ENCODE measurements at regions of chr2 and their contacts with region 1.

Region 1: DNA sequence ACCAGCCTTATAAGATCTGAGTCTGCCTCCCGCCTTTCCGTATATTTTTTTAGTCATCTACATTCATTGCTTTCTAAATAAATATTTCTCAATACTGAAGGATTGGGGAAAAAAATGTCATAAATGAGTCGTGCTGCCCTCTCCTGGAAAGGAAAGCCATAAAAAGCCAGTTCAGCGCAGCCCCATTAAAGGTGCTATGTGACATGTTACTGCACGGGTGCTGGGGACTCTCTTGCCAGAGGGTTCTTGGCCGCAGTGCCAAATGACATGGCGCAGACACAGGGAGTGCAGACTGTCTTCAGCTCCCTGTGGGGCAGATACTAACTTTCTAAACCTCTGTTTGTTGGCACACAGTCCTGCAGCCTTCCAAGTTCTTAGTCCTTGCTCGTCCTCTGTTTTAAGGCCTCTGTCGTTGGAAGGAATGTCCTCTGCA is 53.7 kb upstream of the MAP3K20 start:
- DNase-seq: peak; percentile 57
- ATAC-seq: peak; percentile 88
- H3K4me3 ChIP-seq: no peak overlapping the region
- H3K27ac ChIP-seq: no peak overlapping the region
- H3K4me1 ChIP-seq: no peaks in the 10 kb centered on the region
- H3K27me3 ChIP-seq: peaks cover 2 to 26% of the 10 kb centered on the region in 2 experiments; a peak in 3 of 5 replicates
- CTCF ChIP-seq: peak; percentile 71
- EP300 ChIP-seq: no peak
- POLR2A ChIP-seq: no peak
- RAD21 ChIP-seq: peak; percentile 69

Region 2: GRCh38 chr2:172806493-172806892 is 215.5 kb before region 1 on chr2:
- CTCF ChIA-PET with region 1: interaction called, 6 read pairs
- POLR2A ChIA-PET with region 1: no interaction called
- in situ Hi-C with region 1: no loop called
- intact Hi-C with region 1: loop called (anchors 1 kb)
- DNase-seq: peak; percentile 42
- ATAC-seq: peak; percentile 37; the same call in 1 of the 3 replicates
- H3K4me3 ChIP-seq: no peak overlapping the region
- H3K27ac ChIP-seq: no peak overlapping the region
- H3K4me1 ChIP-seq: no peaks in the 10 kb centered on the region
- H3K27me3 ChIP-seq: no peaks in the 10 kb centered on the region
- CTCF ChIP-seq: peak; percentile 88
- EP300 ChIP-seq: no peak
- POLR2A ChIP-seq: no peak
- RAD21 ChIP-seq: peak; percentile 73

Region 3: GRCh38 chr2:172821370-172822347 is 200.3 kb before region 1 on chr2:
- CTCF ChIA-PET with region 1: no interaction called
- POLR2A ChIA-PET with region 1: no interaction called
- in situ Hi-C with region 1: no loop called
- intact Hi-C with region 1: no loop called
- DNase-seq: no peak
- ATAC-seq: no peak
- H3K4me3 ChIP-seq: no peak overlapping the region
- H3K27ac ChIP-seq: no peak overlapping the region
- H3K4me1 ChIP-seq: no peaks in the 10 kb centered on the region
- H3K27me3 ChIP-seq: peaks cover 0 to 17% of the 10 kb centered on the region in 2 experiments; a peak in 3 of 5 replicates
- CTCF ChIP-seq: no peak
- EP300 ChIP-seq: no peak
- POLR2A ChIP-seq: no peak
- RAD21 ChIP-seq: no peak

Region 4: GRCh38 chr2:172864182-172864581 is 157.8 kb before region 1 on chr2:
- CTCF ChIA-PET with region 1: interaction called, 3 read pairs
- POLR2A ChIA-PET with region 1: no interaction called
- in situ Hi-C with region 1: no loop called
- intact Hi-C with region 1: loop called (anchors 5 kb)
- DNase-seq: peak; percentile 13
- ATAC-seq: peak; percentile 62
- H3K4me3 ChIP-seq: no peak overlapping the region
- H3K27ac ChIP-seq: no peak overlapping the region
- H3K4me1 ChIP-seq: 0 out of 2 replicates have a peak, but pooled peaks cover 9% of the 10 kb centered on the region
- H3K27me3 ChIP-seq: peaks cover 1 to 20% of the 10 kb centered on the region in 2 experiments; a peak in 3 of 5 replicates
- CTCF ChIP-seq: peak; percentile 78
- EP300 ChIP-seq: no peak
- POLR2A ChIP-seq: no peak
- RAD21 ChIP-seq: no peak

Region 5: GRCh38 chr2:172972005-172972619 is 49.8 kb before region 1 on chr2:
- CTCF ChIA-PET with region 1: interaction called, 21 read pairs
- POLR2A ChIA-PET with region 1: no interaction called
- in situ Hi-C with region 1: loop called (anchors 5 kb)
- intact Hi-C with region 1: loop called (anchors 1 kb)
- DNase-seq: peak; percentile 52
- ATAC-seq: peak; percentile 70
- H3K4me3 ChIP-seq: no peak overlapping the region
- H3K27ac ChIP-seq: no peak overlapping the region
- H3K4me1 ChIP-seq: peaks cover 17% of the 10 kb centered on the region
- H3K27me3 ChIP-seq: peaks cover 0 to 11% of the 10 kb centered on the region in 2 experiments; a peak in 2 of 5 replicates
- CTCF ChIP-seq: peak; percentile 78
- EP300 ChIP-seq: no peak
- POLR2A ChIP-seq: no peak
- RAD21 ChIP-seq: no peak

Region 6: DNA sequence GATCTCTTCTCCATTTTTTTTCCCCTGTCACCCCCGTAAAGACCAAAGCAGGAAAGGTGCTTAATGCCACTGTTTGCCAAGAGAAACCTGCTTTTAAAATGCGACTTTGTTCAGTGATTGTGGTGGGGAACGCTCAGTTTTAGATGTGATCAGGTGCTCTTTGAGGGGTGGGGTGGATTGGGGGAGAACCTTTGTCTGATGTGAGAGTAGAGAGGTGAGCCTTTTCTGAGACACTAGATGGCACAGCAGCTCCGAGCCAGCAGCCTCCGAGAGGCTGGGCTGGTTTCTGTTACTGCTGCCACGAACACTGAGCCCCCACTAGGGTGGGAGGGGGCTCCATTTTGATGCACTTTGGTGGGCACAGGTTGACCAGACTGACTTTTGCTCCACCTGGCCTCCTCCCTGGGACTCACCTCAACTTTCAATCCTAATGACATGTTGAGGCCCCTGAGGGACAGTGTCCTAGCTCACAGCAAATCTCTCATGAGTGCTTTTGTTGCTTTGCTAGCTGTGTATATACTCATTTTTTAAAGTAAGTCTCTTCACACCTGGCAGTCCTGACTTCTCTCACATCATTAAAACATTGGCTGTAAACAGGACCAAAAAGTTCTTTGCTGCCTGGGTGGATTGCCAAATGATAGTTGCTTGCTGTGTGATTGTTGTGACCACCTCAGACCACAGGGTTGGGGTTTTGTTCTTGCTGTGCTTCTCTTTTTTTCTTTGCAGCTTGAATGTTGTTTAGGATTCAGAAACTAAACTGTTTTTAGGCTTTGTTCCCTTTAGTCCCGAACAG is 44.5 kb before region 1 on chr2:
- CTCF ChIA-PET with region 1: interaction called, 21 read pairs
- POLR2A ChIA-PET with region 1: no interaction called
- in situ Hi-C with region 1: loop called (anchors 5 kb)
- intact Hi-C with region 1: loop called (anchors 1 kb)
- DNase-seq: no peak
- ATAC-seq: peak; percentile 95
- H3K4me3 ChIP-seq: no peak overlapping the region
- H3K27ac ChIP-seq: no peak overlapping the region
- H3K4me1 ChIP-seq: no peaks in the 10 kb centered on the region
- H3K27me3 ChIP-seq: peaks cover 0 to 27% of the 10 kb centered on the region in 2 experiments; a peak in 3 of 5 replicates
- CTCF ChIP-seq: peak; percentile 79
- EP300 ChIP-seq: no peak
- POLR2A ChIP-seq: no peak
- RAD21 ChIP-seq: peak; percentile 79

Measured in HepG2 (cell line).